CD14-positive monocyte (primary cell): ENCODE measurements at regions of chr11 and their contacts with region 1.

Region 1: GRCh38 chr11:134253188-134253993 is at the starts of genes ACAD8 and THYN1:
- DNase-seq: peak; percentile 88 to 92 (median 90)
- H3K4me3 ChIP-seq: peak within 1 kb of the TSS; percentile 68 to 97 (median 96)
- H3K4me3 Mint-ChIP-seq: peak within 1 kb of the TSS; percentile 95 to 96
- H3K27ac ChIP-seq: peak within 1 kb of the TSS in 1 of 2 donors; percentile 62
- H3K27ac Mint-ChIP-seq: peak within 1 kb of the TSS; percentile 16 to 87 (median 70)
- H3K4me1 ChIP-seq: peaks cover 33 to 37% of the 10 kb centered on the region in 2 donors
- H3K4me1 Mint-ChIP-seq: peaks cover 35% of the 10 kb centered on the region
- H3K27me3 ChIP-seq: no peaks in the 10 kb centered on the region
- H3K27me3 Mint-ChIP-seq: peaks cover 2 to 6% (median 3%) of the 10 kb centered on the region in 3 donors
- CTCF ChIP-seq: peak; percentile 28
- polyA plus RNA-seq, gene ACAD8: 16.7 to 37.2 (median 19.3) TPM
- polyA plus RNA-seq, gene THYN1: 36.4 to 65.7 (median 57.6) TPM

Region 2: DNA sequence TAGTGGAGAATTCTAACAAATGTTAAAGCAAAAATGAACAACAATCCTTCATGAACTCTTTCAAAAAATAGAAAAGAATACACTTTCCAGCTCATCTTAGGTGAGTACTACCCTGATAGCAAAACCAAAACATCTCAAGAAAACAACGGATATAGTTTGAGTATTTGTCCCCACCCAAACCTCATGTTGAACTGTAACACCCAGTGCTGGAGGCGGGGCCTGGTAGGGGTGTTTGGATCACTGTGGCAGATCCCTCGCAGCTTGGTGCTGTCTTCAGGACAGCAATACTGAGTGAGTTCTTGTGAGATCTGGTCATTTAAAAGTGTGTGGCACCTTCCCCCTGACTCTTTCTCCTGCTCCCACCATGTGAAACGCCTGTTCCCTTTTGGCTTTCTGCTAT is 56.6 kb before region 1 on chr11:
- intact Hi-C with region 1: no loop called
- DNase-seq: no peak
- H3K4me3 ChIP-seq: no peak overlapping the region
- H3K4me3 Mint-ChIP-seq: no peak overlapping the region
- H3K27ac ChIP-seq: no peak overlapping the region
- H3K27ac Mint-ChIP-seq: no peak overlapping the region
- H3K4me1 ChIP-seq: no peaks in the 10 kb centered on the region
- H3K4me1 Mint-ChIP-seq: no peaks in the 10 kb centered on the region
- H3K27me3 ChIP-seq: no peaks in the 10 kb centered on the region
- H3K27me3 Mint-ChIP-seq: peaks cover 0 to 2% (median 0%) of the 10 kb centered on the region in 3 donors
- CTCF ChIP-seq: no peak

Region 3: GRCh38 chr11:134215836-134216235 is 37.6 kb before region 1 on chr11:
- intact Hi-C with region 1: loop called in 1 of 2 experiments (anchors 5 kb)
- DNase-seq: no peak
- H3K4me3 ChIP-seq: no peak overlapping the region
- H3K4me3 Mint-ChIP-seq: no peak overlapping the region
- H3K27ac ChIP-seq: no peak overlapping the region
- H3K27ac Mint-ChIP-seq: no peak overlapping the region
- H3K4me1 ChIP-seq: no peaks in the 10 kb centered on the region
- H3K4me1 Mint-ChIP-seq: no peaks in the 10 kb centered on the region
- H3K27me3 ChIP-seq: no peaks in the 10 kb centered on the region
- H3K27me3 Mint-ChIP-seq: no peaks in the 10 kb centered on the region
- CTCF ChIP-seq: no peak

Region 4: GRCh38 chr11:134224710-134225662 is 28.4 kb before region 1 on chr11:
- intact Hi-C with region 1: loop called in 1 of 2 experiments (anchors 1 kb)
- DNase-seq: peak; percentile 8 to 37 (median 13)
- H3K4me3 ChIP-seq: peak overlapping the region; percentile 65 to 86 (median 86)
- H3K4me3 Mint-ChIP-seq: peak overlapping the region; percentile 94 to 96
- H3K27ac ChIP-seq: peak overlapping the region; percentile 7 to 96
- H3K27ac Mint-ChIP-seq: peak overlapping the region; percentile 60 to 86 (median 82)
- H3K4me1 ChIP-seq: peaks cover 23 to 38% of the 10 kb centered on the region in 2 donors
- H3K4me1 Mint-ChIP-seq: peaks cover 54% of the 10 kb centered on the region
- H3K27me3 ChIP-seq: no peaks in the 10 kb centered on the region
- H3K27me3 Mint-ChIP-seq: peaks cover 0 to 1% (median 0%) of the 10 kb centered on the region in 3 donors
- CTCF ChIP-seq: no peak